Posterior cingulate gyrus (tissue), 11 donors: ENCODE measurements at regions of chr16 and their contacts with region 1.

Region 1: GRCh38 chr16:2500918-2501750 is 12.6 kb upstream of the ATP6V0C start:
- DNase-seq: peak; percentile 81 to 98 (median 88)

Region 2: DNA sequence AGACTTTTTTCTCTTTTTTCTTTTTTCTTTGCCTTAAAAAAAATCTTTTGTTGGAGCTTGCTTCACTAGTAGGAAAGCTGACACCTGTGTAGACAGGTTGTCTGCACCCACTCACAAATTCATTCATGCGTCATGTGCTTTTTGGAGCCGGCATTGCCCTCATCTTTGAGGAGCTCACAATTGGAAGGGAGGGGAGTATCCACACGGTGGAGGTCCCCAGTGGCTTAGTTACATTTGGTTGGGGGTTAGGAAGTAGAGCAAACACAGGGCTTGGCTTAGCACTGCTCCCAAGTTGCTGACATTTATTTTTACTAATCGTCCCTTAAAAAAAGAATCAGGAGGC is 610.5 kb before region 1 on chr16:
- intact Hi-C with region 1: no loop called
- DNase-seq: no peak

Region 3: DNA sequence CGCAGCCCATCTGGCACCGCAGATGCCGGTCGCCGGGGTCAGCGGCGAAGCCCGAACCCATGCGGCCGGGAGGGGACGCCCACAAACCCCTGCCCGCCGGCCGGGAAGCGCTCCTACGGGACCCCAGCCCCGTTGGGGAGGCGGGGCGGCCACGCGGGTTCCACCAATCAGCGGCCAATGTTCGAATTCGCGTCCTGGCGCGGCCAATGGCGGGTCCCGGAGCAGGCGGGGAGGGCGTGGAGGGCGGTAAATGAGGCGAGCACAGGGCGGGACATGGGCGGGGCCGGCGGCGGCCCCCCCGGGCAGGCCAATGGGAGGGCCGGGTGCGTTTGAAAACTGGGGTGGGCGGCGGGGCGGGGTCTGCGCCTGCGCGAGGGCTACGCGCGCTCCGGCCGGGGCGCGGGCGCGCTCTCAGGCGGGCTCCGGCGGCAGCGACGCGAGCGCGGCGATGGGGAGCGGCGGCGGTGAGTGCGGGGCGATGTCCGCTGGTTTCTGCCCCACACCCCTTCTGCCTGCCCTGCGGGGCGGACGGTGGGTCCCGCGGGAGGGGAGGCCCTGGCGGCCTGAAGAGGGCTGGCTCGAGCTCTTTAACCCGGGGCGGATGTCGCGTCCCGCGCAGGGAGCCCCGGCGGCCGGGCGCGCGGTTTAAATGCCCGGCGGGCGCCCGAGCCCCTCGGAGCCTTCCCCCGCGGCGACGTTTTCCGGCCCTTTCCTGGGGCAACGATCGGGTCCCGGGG is 71.9 kb before region 1 on chr16 and contains the start of gene CCNF:
- intact Hi-C with region 1: loop called (anchors 1 kb)
- DNase-seq: peak; percentile 96 to 99 (median 98)

Region 4: DNA sequence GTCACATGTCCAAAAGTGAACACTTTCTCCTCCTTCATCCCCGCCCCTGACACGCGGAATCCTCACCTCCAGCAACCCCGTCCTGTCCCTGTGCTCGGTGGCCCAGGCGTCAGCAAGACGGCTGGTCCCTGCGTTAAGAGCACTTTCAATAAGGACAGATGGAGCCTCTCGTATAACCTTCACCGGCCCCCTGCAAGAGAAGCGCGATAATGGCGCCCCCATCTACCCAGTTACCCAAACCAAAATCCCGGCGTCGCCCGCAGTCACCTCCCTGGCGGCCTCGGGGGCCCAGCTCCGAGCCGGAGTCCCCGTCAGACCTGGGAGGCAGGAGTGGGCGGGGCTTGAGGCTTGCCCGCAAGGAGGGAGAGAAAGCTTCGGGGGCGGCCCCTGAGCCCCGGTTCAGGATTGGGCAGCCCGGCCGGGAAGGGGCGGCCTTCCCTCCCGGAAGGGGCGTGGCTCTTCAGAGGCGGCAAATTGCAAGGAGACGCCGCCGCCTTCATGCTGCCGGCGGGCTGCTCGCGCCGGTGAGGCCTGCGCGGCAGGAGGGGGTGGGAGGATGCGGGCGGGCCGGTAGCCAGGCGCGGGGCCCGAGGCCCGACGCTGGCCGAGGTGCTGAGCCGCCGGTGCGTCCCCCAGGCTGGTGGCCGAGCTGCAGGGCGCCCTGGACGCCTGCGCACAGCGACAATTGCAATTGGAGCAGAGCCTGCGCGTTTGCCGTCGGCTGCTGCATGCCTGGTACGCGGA is 41.3 kb before region 1 on chr16 and contains the start of gene TEDC2:
- intact Hi-C with region 1: no loop called
- DNase-seq: peak; percentile 91 to 99 (median 96)

Region 5: DNA sequence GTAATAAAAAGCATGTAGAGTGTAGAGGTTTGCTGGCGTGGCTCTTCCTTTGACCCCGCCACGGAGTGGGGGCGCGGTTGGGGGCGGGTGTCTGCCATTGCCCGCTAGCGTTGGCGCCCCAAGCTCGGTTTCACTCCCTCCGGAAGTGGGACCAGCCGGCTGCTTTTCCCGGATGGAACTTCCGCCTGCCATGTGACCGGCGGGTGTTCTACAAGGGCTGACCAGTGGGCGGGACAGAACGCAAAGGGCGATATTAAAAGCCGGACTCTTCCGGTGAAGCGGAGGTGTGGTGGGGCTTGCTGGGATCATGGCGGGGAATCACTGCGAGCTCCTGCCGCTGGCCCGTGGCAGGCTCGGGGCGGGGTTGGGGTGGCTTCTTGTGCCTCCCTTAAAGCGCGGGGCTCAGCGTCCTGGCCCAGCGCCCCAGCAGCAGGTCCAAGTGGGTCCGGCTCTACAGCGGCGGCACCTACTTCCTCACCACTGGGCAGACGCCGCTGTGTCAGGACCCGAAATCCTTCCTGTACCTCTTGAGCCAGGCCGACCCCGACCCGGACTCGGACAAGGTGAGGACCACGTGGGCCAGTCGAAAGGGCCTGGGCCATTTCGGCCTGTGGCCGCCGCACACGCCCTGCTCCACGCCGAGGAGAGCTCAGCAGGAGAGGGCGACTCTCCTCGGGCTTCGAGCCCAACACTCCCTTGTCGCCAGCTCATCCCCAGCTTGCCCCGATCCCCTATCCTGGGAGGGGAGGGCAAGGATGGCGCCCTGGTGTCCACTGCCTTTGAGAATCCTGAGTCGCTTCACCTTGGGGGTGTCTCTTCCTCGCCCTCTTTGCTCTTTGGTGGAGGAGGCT is 102.3 kb after region 1 on chr16:
- intact Hi-C with region 1: no loop called
- DNase-seq: peak; percentile 94 to 99 (median 98)